HEK293 (cell line): ENCODE measurements at regions of chr9 and their contacts with region 1.

Region 1: DNA sequence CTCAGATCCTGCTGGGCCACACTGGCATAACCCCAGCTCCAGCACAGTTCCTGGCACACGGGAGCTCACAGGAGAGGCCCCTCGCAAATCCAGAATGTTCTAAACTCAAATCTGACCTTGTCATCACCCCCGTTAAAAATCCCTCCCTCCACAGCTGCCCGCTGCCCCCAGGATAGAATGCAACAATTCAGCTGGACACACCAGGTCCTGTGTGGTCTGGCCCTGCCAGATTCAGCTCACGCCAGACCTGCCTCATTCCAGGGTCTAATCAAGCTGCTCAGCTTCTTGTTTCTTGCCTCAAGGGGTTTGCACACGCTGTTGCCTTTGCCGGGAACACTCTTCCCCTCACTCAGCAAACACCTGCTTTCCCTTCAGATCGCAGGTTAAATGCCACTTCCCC is 45.0 kb upstream of the ASS1 start:
- H3K4me3 ChIP-seq: no peak overlapping the region
- H3K27ac ChIP-seq: no peak overlapping the region
- H3K4me1 ChIP-seq: no peaks in the 10 kb centered on the region
- CTCF ChIP-seq: no peak

Region 2: GRCh38 chr9:130364619-130365322 is 35.0 kb before region 1 on chr9:
- CTCF ChIA-PET with region 1: no interaction called
- POLR2A ChIA-PET with region 1: interaction called, 10 read pairs
- H3K4me3 ChIP-seq: no peak overlapping the region
- H3K27ac ChIP-seq: no peak overlapping the region
- H3K4me1 ChIP-seq: no peaks in the 10 kb centered on the region
- CTCF ChIP-seq: no peak

Region 3: GRCh38 chr9:130893341-130894101 is 493.8 kb after region 1 on chr9:
- CTCF ChIA-PET with region 1: no interaction called
- POLR2A ChIA-PET with region 1: no interaction called
- H3K4me3 ChIP-seq: no peak overlapping the region
- H3K27ac ChIP-seq: no peak overlapping the region
- H3K4me1 ChIP-seq: no peaks in the 10 kb centered on the region
- CTCF ChIP-seq: peak; percentile 53